ENCODE measurements at regions of chr16 and their contacts with region 1.

Region 1: DNA sequence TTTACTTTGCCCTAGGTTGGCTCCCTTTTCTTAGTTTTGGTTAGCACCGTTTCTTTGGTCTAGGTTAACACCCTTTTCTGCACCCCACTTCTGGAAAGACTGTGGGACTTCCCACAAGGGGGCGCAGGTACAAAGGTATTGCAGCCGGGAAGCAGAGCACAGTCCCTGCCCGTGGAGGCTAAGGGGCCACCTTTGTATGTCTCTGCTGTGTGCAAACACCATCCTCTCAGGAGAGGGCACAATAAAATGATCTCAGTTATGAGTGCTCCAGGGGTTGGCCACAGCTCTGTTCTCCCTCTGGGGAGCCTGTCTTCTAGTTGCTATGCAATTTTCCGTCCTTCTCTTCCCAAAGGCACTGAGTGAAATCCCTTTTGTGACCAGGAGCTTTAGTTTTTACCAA is 28.4 kb upstream of the TMC5 start:
- DNase-seq: peak in 1 of 2 experiments; percentile 88
- H3K4me3 ChIP-seq: no peak overlapping the region
- H3K27ac ChIP-seq: no peak overlapping the region
- H3K4me1 ChIP-seq: no peaks in the 10 kb centered on the region
- H3K27me3 ChIP-seq: no peaks in the 10 kb centered on the region
- CTCF ChIP-seq: peak; percentile 71 to 86 (median 83)
- EP300 ChIP-seq: no peak
- POLR2A ChIP-seq: no peak
- RAD21 ChIP-seq: peak; percentile 85 to 89

Region 2: GRCh38 chr16:19344224-19344801 is 44.9 kb before region 1 on chr16:
- CTCF ChIA-PET with region 1: no interaction called
- POLR2A ChIA-PET with region 1: no interaction called
- DNase-seq: no peak
- H3K4me3 ChIP-seq: no peak overlapping the region
- H3K27ac ChIP-seq: no peak overlapping the region
- H3K4me1 ChIP-seq: peaks cover 6 to 15% (median 12%) of the 10 kb centered on the region in 4 experiments
- H3K27me3 ChIP-seq: no peaks in the 10 kb centered on the region; a peak in 1 of 7 replicates
- CTCF ChIP-seq: no peak
- EP300 ChIP-seq: no peak
- POLR2A ChIP-seq: no peak
- RAD21 ChIP-seq: no peak

Region 3: DNA sequence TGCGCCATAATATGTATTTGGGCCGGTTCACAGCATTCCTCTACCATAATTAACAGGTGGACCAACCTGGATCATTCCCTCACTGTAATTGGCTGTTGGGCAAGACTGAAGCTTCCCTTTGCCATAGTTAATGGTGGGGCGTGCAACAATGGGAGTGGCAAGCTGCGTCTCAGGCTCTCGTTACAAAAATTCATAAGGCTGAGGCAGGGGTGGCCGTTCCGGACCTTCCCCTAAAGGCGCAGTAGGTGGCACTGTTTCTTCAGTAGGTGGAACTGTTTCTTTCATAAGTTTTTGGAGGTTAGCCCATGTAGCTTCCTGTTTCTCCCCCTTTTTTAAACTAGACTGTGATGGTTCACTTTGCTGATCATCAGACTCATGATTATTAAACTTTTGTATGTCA is 11.5 kb after region 1 on chr16:
- CTCF ChIA-PET with region 1: interaction called, 29 read pairs
- POLR2A ChIA-PET with region 1: interaction called, 3 read pairs
- DNase-seq: peak; percentile 15 to 55
- H3K4me3 ChIP-seq: no peak overlapping the region
- H3K27ac ChIP-seq: no peak overlapping the region
- H3K4me1 ChIP-seq: no peaks in the 10 kb centered on the region
- H3K27me3 ChIP-seq: no peaks in the 10 kb centered on the region; a peak in 1 of 7 replicates
- CTCF ChIP-seq: peak; percentile 47 to 56 (median 53)
- EP300 ChIP-seq: no peak
- POLR2A ChIP-seq: no peak
- RAD21 ChIP-seq: peak; percentile 73 to 74

Region 4: GRCh38 chr16:19406866-19407491 is 17.7 kb after region 1 on chr16:
- CTCF ChIA-PET with region 1: interaction called, 29 read pairs
- POLR2A ChIA-PET with region 1: interaction called, 4 read pairs
- DNase-seq: peak in 1 of 2 experiments; percentile 21
- H3K4me3 ChIP-seq: peak overlapping the region in 1 of 4 experiments; percentile 14; a peak in 2 of 8 replicates
- H3K27ac ChIP-seq: no peak overlapping the region
- H3K4me1 ChIP-seq: peaks cover 0 to 3% (median 2%) of the 10 kb centered on the region in 4 experiments; a peak in 4 of 7 replicates
- H3K27me3 ChIP-seq: peaks cover 0 to 12% (median 5%) of the 10 kb centered on the region in 4 experiments; a peak in 4 of 7 replicates
- CTCF ChIP-seq: no peak
- EP300 ChIP-seq: no peak
- POLR2A ChIP-seq: no peak
- RAD21 ChIP-seq: no peak

Region 5: GRCh38 chr16:19497176-19497575 is 107.9 kb after region 1 on chr16:
- CTCF ChIA-PET with region 1: interaction called, 113 read pairs
- POLR2A ChIA-PET with region 1: interaction called, 4 read pairs
- DNase-seq: no peak
- H3K4me3 ChIP-seq: no peak overlapping the region
- H3K27ac ChIP-seq: no peak overlapping the region
- H3K4me1 ChIP-seq: no peaks in the 10 kb centered on the region
- H3K27me3 ChIP-seq: no peaks in the 10 kb centered on the region
- CTCF ChIP-seq: no peak
- EP300 ChIP-seq: no peak
- POLR2A ChIP-seq: no peak
- RAD21 ChIP-seq: no peak

Region 6: GRCh38 chr16:19523648-19524355 is 134.6 kb after region 1 on chr16 and contains the start of gene CCP110:
- CTCF ChIA-PET with region 1: no interaction called
- POLR2A ChIA-PET with region 1: no interaction called
- DNase-seq: peak; percentile 69 to 92
- H3K4me3 ChIP-seq: peak within 1 kb of the TSS; percentile 85 to 92 (median 88)
- H3K27ac ChIP-seq: peak within 1 kb of the TSS; percentile 9; the same call in 1 of the 2 replicates
- H3K4me1 ChIP-seq: peaks cover 5 to 17% (median 11%) of the 10 kb centered on the region in 4 experiments; a peak in 6 of 7 replicates
- H3K27me3 ChIP-seq: no peaks in the 10 kb centered on the region
- CTCF ChIP-seq: no peak
- EP300 ChIP-seq: no peak
- POLR2A ChIP-seq: no peak
- RAD21 ChIP-seq: no peak
- total RNA-seq, gene CCP110: 16.1 and 19.8 TPM in 2 replicates

Measured in H1 (cell line).